ENCODE measurements at regions of chr15 and their contacts with region 1.

Region 1: GRCh38 chr15:51649659-51650521 is 27.3 kb upstream of the DMXL2 start:
- DNase-seq: no peak
- ATAC-seq: peak; percentile 69 to 81
- H3K4me3 ChIP-seq: no peak overlapping the region
- H3K27ac ChIP-seq: no peak overlapping the region
- H3K4me1 ChIP-seq: no peaks in the 10 kb centered on the region
- H3K27me3 ChIP-seq: no peaks in the 10 kb centered on the region
- CTCF ChIP-seq: peak; percentile 76

Region 2: DNA sequence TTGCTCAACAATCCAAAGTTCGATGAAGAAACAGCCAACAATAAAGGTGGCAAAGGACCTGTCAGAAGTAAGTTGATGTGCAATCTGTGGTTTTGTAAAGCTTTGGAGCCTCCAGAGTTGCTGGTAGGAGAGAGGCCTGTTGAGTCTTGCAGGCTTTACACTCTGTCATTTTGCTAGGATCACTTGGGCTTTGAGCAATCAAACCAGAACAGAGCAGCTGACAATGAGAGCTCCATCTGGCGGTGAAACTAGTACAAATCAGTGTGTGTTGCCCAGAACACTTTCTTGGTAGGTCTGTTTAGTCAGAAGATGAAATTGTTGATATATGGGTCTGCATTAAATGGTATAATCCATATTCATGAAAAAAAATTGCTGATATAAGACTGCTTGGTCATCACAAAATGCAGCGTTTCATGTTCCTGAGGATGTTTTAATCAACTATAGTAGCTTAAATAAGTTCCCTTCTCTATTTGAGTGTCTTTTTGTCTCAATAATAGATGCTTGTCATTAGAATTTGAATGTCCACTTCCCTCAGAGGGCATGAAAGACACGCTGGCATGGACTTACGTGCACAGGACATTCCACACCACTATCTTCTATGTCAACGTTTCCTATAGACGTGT is 127.2 kb after region 1 on chr15:
- intact Hi-C with region 1: loop called (anchors 5 kb)
- DNase-seq: no peak
- ATAC-seq: peak; percentile 93 to 96
- H3K4me3 ChIP-seq: no peak overlapping the region
- H3K27ac ChIP-seq: no peak overlapping the region
- H3K4me1 ChIP-seq: peaks cover 7% of the 10 kb centered on the region
- H3K27me3 ChIP-seq: no peaks in the 10 kb centered on the region
- CTCF ChIP-seq: peak; percentile 74